Cardiac septum (tissue), 1 donor: ENCODE measurements at regions of chr14 and their contacts with region 1.

Region 1: GRCh38 chr14:20682435-20683124 is 1.8 kb upstream of the RNASE4 start:
- DNase-seq: peak; percentile 94

Region 2: GRCh38 chr14:20413045-20413799 is 269.4 kb before region 1 on chr14 and contains the start of gene TEP1:
- intact Hi-C with region 1: loop called (anchors 5 kb)
- DNase-seq: peak; percentile 95
- total RNA-seq, gene TEP1: 15.7 TPM

Region 3: DNA sequence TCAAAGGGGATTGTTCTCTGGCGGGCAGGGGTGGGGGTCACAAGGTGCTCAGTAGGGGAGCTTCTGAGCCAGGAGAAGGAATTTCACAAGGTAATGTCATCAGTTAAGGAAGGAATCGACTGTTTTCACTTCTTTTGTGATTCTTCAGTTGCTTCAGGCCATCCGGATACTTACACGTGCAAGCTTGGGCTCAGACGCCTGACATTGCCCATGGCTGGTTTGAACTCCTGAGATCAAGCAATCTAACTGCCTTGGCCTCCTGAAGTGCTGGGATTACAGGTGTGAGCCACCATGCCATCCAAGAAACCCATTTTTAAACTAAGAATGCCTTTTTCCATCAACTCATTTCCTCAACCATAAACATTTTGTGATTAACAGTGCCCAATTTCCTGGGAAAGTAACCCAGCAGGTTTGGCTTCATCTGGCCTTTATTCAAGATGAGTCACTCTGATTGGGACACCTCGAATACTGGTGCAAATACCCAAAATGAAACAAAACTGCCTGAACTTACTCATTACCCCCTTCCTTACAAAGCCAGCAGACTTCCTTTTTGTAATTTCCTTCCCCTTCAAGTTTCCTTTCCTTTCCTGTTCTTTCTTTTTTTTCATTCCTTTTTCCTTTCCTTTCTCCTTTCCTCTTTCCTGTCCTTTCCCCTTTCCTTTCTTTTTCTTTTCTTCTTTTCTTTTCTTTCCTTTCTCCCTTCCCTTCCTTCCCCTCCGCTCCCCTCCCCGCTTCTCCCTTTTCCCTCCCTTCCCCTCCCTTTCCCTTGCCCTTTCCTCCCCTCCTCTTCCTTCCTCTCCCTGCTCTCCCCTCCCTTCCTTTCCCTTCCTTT is 187.4 kb before region 1 on chr14:
- intact Hi-C with region 1: no loop called
- DNase-seq: no peak

Region 4: GRCh38 chr14:20613094-20614037 is 69.2 kb before region 1 on chr14:
- intact Hi-C with region 1: loop called (anchors 1 kb)
- DNase-seq: peak; percentile 83

Region 5: DNA sequence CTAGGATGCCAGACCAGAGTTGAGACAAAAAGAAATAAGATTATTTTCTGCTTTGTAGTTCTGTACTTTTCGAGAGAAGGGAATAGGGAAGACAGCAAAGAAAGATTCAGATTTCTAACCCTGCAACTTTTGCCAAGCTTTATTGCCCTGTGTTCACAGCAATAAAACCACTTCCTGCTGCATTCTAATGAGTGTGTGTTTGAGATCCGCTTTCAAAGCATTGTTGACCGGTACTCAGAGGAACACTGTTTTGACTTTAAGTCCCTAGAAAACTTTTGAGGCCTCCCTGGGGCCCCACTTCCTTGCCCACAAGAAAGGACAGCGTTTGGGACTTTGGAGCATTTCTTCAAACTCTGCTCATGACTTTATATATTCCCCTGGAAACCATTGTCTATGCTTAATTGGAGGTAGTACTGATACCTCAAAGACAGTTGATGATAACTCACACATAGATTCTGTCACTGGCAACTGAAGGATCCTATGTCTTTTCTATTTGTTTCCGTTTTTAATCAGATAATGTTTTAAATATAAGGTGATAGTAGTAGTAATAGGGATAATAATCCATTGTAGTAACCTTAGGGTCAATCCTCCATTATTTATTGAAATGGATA is 99.8 kb after region 1 on chr14:
- intact Hi-C with region 1: no loop called
- DNase-seq: no peak

Region 6: GRCh38 chr14:20970983-20971704 is 288.6 kb after region 1 on chr14:
- intact Hi-C with region 1: loop called (anchors 5 kb)
- DNase-seq: peak; percentile 95